Ascending aorta (tissue), 2 donors: ENCODE measurements at regions of chr10 and their contacts with region 1.

Region 1: DNA sequence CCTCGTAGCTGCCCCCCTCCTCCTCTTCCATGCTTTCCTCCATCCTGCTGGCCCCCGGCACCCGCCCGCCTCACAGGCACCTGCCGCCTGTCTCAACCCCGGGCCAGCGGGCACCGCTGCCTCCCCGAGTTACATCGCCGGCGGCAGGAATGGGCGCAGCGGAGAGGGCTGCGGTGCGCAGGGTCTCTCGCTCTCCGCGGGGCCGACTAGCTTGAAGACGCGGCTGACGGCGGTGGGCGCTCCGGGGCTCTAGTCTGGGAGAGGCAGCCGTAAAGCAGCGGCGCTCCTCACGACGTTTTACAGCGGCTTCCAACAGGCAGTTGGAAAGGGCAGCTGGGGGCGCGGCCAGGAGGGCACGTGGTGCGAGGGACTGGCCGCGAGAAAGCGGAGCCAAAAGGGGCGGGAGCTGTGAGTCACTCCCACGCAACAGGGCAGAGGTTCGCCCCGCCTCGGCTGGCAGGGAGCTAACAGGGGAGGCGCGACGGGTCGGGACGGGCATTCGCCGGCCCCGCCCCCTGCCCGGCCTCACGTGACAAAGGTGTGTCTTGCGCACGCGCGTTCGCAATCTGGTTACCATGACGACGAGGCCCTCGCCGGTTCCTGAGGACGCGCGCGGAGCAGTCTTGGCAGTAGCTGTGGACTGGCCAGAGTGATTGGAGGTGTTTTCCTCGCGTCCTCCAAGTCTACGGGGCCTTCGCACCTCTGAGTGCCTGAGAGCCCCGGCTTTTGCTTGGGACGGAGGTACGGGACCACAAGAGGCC is at the start of gene CACUL1:
- DNase-seq: peak; percentile 99 to 100
- H3K4me3 ChIP-seq: peak within 1 kb of the TSS; percentile 95 to 100
- H3K27ac ChIP-seq: peak within 1 kb of the TSS; percentile 77 to 79
- H3K4me1 ChIP-seq: peaks cover 4 to 19% of the 10 kb centered on the region in 2 donors
- H3K27me3 ChIP-seq: no peaks in the 10 kb centered on the region
- CTCF ChIP-seq: no peak
- total RNA-seq, gene CACUL1: 23.6 TPM

Region 2: GRCh38 chr10:118046395-118047156 is 708.3 kb before region 1 on chr10 and contains the start of gene RAB11FIP2:
- intact Hi-C with region 1: loop called (anchors 2 kb)
- DNase-seq: peak; percentile 82 to 98
- H3K4me3 ChIP-seq: peak within 1 kb of the TSS; percentile 75 to 96
- H3K27ac ChIP-seq: peak within 1 kb of the TSS; percentile 91 to 98
- H3K4me1 ChIP-seq: peaks cover 2 to 22% of the 10 kb centered on the region in 2 donors
- H3K27me3 ChIP-seq: no peaks in the 10 kb centered on the region
- CTCF ChIP-seq: peak in 1 of 3 experiments; percentile 17
- total RNA-seq, gene RAB11FIP2: 2.8 TPM

Region 3: DNA sequence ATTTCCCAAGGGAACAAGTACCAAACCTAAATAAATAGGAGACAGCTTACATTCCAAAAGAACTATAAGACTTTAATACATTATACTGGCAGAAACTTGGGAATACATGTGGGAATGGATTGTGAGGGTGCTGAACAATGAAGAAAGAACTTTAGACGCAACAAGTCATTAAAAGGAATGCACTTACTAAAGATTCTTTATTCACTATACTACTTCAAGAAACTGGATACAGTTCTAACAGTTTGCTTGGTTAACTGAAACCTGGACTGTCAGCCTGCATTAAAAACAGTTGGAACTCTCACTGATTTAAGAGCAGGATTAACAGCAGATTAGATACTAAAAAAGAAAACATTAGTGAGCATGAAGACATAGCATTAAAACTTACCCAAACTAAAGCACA is 12.1 kb before region 1 on chr10:
- intact Hi-C with region 1: loop called (anchors 1 kb)
- DNase-seq: no peak
- H3K4me3 ChIP-seq: no peak overlapping the region
- H3K27ac ChIP-seq: peak overlapping the region; percentile 28 to 45
- H3K4me1 ChIP-seq: peaks cover 4 to 33% of the 10 kb centered on the region in 2 donors
- H3K27me3 ChIP-seq: no peaks in the 10 kb centered on the region
- CTCF ChIP-seq: no peak

Region 4: DNA sequence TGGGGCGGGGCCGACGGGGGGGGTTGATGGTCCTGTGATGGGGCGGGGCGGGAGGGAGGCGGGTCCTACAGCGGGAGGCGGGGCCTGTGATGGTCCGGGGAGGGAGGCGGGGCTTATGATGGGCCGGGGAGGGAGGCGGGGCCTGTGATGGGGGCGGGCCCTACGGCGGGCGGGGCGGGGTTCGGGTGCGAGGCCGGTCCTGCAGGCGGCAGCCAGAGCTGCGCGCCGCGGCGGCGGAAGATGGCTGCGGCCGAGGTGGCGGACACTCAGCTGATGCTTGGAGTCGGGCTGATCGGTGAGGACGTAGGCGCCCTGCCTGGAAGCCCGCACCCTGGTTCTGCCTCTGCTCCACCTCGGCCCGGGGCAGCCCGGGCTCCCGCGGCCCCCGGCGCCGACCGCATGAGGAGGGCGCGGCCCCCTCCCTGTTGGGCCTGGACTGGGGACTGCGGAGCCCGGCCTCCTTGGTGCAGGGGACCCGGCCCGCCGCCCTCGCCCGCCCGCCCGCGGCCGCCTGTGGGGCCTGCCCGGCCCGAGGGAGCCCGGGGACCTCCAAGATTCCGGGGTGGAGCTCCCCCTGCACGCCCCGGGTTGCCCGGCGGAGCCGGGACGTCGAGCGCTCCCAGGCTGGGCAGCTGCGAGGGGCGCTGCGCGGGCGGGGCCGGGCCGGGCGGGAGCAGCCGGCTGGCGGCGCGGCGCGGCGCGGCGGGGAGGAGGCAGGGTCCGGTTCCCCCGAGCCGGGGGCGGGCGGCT is 349.2 kb after region 1 on chr10 and contains the start of gene DENND10:
- intact Hi-C with region 1: loop called (anchors 2 kb)
- DNase-seq: peak; percentile 13 to 87
- H3K4me3 ChIP-seq: peak within 1 kb of the TSS; percentile 98 to 100
- H3K27ac ChIP-seq: peak within 1 kb of the TSS; percentile 43 to 76
- H3K4me1 ChIP-seq: no peaks in the 10 kb centered on the region
- H3K27me3 ChIP-seq: no peaks in the 10 kb centered on the region
- CTCF ChIP-seq: no peak
- total RNA-seq, gene DENND10: 85.1 TPM

Region 5: GRCh38 chr10:119892188-119893065 is 1137.5 kb after region 1 on chr10 and contains the start of gene SEC23IP:
- intact Hi-C with region 1: loop called (anchors 10 kb)
- DNase-seq: peak; percentile 87 to 98
- H3K4me3 ChIP-seq: peak within 1 kb of the TSS; percentile 69 to 94
- H3K27ac ChIP-seq: peak within 1 kb of the TSS; percentile 81 to 90
- H3K4me1 ChIP-seq: peaks cover 13 to 23% of the 10 kb centered on the region in 2 donors
- H3K27me3 ChIP-seq: no peaks in the 10 kb centered on the region
- CTCF ChIP-seq: no peak
- total RNA-seq, gene SEC23IP: 17.1 TPM